Natural killer cell (primary cell): ENCODE measurements at regions of chr17 and their contacts with region 1.

Region 1: GRCh38 chr17:17356149-17356930 is 53.2 kb downstream of the NT5M start:
- DNase-seq: peak; percentile 61 to 86
- ATAC-seq: peak; percentile 73 to 88 (median 85)
- H3K4me3 ChIP-seq: no peak overlapping the region
- H3K4me3 Mint-ChIP-seq: no peak overlapping the region
- H3K27ac ChIP-seq: no peak overlapping the region
- H3K27ac Mint-ChIP-seq: no peak overlapping the region
- H3K4me1 ChIP-seq: peaks cover 11% of the 10 kb centered on the region
- H3K4me1 Mint-ChIP-seq: no peaks in the 10 kb centered on the region
- H3K27me3 ChIP-seq: no peaks in the 10 kb centered on the region
- H3K27me3 Mint-ChIP-seq: no peaks in the 10 kb centered on the region
- CTCF ChIP-seq: peak; percentile 89

Region 2: GRCh38 chr17:16419074-16419928 is 937.0 kb before region 1 on chr17:
- intact Hi-C with region 1: no loop called
- DNase-seq: peak in 1 of 2 donors; percentile 59
- ATAC-seq: peak in 2 of 3 donors; percentile 24 to 27
- H3K4me3 ChIP-seq: no peak overlapping the region
- H3K4me3 Mint-ChIP-seq: peak overlapping the region; percentile 54
- H3K27ac ChIP-seq: peak overlapping the region; percentile 37
- H3K27ac Mint-ChIP-seq: peak overlapping the region; percentile 98 to 100
- H3K4me1 ChIP-seq: peaks cover 53% of the 10 kb centered on the region
- H3K4me1 Mint-ChIP-seq: peaks cover 49 to 64% of the 10 kb centered on the region in 2 donors
- H3K27me3 ChIP-seq: no peaks in the 10 kb centered on the region
- H3K27me3 Mint-ChIP-seq: no peaks in the 10 kb centered on the region
- CTCF ChIP-seq: no peak

Region 3: GRCh38 chr17:17440010-17440843 is 83.9 kb after region 1 on chr17:
- intact Hi-C with region 1: loop called (anchors 1 kb)
- DNase-seq: peak; percentile 62 to 88
- ATAC-seq: peak; percentile 70 to 84 (median 81)
- H3K4me3 ChIP-seq: no peak overlapping the region
- H3K4me3 Mint-ChIP-seq: no peak overlapping the region
- H3K27ac ChIP-seq: no peak overlapping the region
- H3K27ac Mint-ChIP-seq: no peak overlapping the region
- H3K4me1 ChIP-seq: peaks cover 3% of the 10 kb centered on the region
- H3K4me1 Mint-ChIP-seq: peaks cover 0 to 5% of the 10 kb centered on the region in 2 donors
- H3K27me3 ChIP-seq: no peaks in the 10 kb centered on the region
- H3K27me3 Mint-ChIP-seq: no peaks in the 10 kb centered on the region
- CTCF ChIP-seq: peak; percentile 75

Region 4: GRCh38 chr17:17496189-17497064 is 140.1 kb after region 1 on chr17 and contains the start of gene RASD1:
- intact Hi-C with region 1: loop called (anchors 1 kb)
- DNase-seq: peak; percentile 79 to 88
- ATAC-seq: peak; percentile 87 to 92 (median 88)
- H3K4me3 ChIP-seq: peak within 1 kb of the TSS; percentile 50
- H3K4me3 Mint-ChIP-seq: peak within 1 kb of the TSS; percentile 92
- H3K27ac ChIP-seq: peak within 1 kb of the TSS; percentile 3
- H3K27ac Mint-ChIP-seq: peak within 1 kb of the TSS in 1 of 2 donors; percentile 48
- H3K4me1 ChIP-seq: peaks cover 19% of the 10 kb centered on the region
- H3K4me1 Mint-ChIP-seq: peaks cover 6 to 16% of the 10 kb centered on the region in 2 donors
- H3K27me3 ChIP-seq: peaks cover 6% of the 10 kb centered on the region
- H3K27me3 Mint-ChIP-seq: peaks cover 5 to 8% of the 10 kb centered on the region in 2 donors
- CTCF ChIP-seq: peak; percentile 99
- total RNA-seq, gene RASD1: 0.60 to 2.4 (median 1.2) TPM

Region 5: DNA sequence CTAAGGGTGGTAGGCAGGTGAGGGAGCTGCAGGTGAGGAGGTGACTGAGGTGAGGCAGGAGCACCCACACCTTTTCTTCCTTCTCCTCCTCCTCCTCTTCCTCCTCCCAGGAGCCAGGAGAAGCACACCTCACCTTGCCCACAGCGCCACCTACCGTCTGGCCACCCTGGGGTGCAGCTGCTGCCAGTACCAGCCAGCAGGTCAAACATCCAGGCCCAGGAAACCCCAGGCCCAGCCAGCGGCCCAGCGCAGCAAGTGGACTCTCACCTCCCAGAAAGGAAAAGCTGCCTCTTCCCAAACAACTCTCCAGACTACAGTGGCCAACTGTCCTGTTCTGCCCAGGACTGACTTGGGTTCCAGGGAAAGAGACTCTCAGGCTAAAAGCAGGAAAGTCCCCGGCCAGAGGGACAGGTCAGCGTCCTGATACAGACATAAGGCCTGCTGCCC is 212.4 kb after region 1 on chr17:
- intact Hi-C with region 1: loop called (anchors 5 kb)
- DNase-seq: peak; percentile 30 to 61
- ATAC-seq: no peak
- H3K4me3 ChIP-seq: no peak overlapping the region
- H3K4me3 Mint-ChIP-seq: no peak overlapping the region
- H3K27ac ChIP-seq: no peak overlapping the region
- H3K27ac Mint-ChIP-seq: no peak overlapping the region
- H3K4me1 ChIP-seq: no peaks in the 10 kb centered on the region
- H3K4me1 Mint-ChIP-seq: no peaks in the 10 kb centered on the region
- H3K27me3 ChIP-seq: no peaks in the 10 kb centered on the region
- H3K27me3 Mint-ChIP-seq: no peaks in the 10 kb centered on the region
- CTCF ChIP-seq: peak; percentile 25

Region 6: GRCh38 chr17:17613708-17614114 is 257.4 kb after region 1 on chr17:
- intact Hi-C with region 1: loop called (anchors 1 kb)
- DNase-seq: peak in 1 of 2 donors; percentile 72
- ATAC-seq: peak; percentile 76 to 92 (median 92)
- H3K4me3 ChIP-seq: no peak overlapping the region
- H3K4me3 Mint-ChIP-seq: no peak overlapping the region
- H3K27ac ChIP-seq: no peak overlapping the region
- H3K27ac Mint-ChIP-seq: no peak overlapping the region
- H3K4me1 ChIP-seq: peaks cover 3% of the 10 kb centered on the region
- H3K4me1 Mint-ChIP-seq: peaks cover 0 to 7% of the 10 kb centered on the region in 2 donors
- H3K27me3 ChIP-seq: no peaks in the 10 kb centered on the region
- H3K27me3 Mint-ChIP-seq: no peaks in the 10 kb centered on the region
- CTCF ChIP-seq: peak; percentile 75

Region 7: GRCh38 chr17:17641621-17642409 is 285.5 kb after region 1 on chr17:
- intact Hi-C with region 1: loop called (anchors 1 kb)
- DNase-seq: peak; percentile 74 to 92
- ATAC-seq: peak; percentile 87 to 98 (median 97)
- H3K4me3 ChIP-seq: no peak overlapping the region
- H3K4me3 Mint-ChIP-seq: no peak overlapping the region
- H3K27ac ChIP-seq: no peak overlapping the region
- H3K27ac Mint-ChIP-seq: no peak overlapping the region
- H3K4me1 ChIP-seq: peaks cover 13% of the 10 kb centered on the region
- H3K4me1 Mint-ChIP-seq: peaks cover 0 to 9% of the 10 kb centered on the region in 2 donors
- H3K27me3 ChIP-seq: no peaks in the 10 kb centered on the region
- H3K27me3 Mint-ChIP-seq: peaks cover 0 to 6% of the 10 kb centered on the region in 2 donors
- CTCF ChIP-seq: peak; percentile 78